Ovary (tissue), 10 donors: ENCODE measurements at regions of chr3 and their contacts with region 1.

Region 1: DNA sequence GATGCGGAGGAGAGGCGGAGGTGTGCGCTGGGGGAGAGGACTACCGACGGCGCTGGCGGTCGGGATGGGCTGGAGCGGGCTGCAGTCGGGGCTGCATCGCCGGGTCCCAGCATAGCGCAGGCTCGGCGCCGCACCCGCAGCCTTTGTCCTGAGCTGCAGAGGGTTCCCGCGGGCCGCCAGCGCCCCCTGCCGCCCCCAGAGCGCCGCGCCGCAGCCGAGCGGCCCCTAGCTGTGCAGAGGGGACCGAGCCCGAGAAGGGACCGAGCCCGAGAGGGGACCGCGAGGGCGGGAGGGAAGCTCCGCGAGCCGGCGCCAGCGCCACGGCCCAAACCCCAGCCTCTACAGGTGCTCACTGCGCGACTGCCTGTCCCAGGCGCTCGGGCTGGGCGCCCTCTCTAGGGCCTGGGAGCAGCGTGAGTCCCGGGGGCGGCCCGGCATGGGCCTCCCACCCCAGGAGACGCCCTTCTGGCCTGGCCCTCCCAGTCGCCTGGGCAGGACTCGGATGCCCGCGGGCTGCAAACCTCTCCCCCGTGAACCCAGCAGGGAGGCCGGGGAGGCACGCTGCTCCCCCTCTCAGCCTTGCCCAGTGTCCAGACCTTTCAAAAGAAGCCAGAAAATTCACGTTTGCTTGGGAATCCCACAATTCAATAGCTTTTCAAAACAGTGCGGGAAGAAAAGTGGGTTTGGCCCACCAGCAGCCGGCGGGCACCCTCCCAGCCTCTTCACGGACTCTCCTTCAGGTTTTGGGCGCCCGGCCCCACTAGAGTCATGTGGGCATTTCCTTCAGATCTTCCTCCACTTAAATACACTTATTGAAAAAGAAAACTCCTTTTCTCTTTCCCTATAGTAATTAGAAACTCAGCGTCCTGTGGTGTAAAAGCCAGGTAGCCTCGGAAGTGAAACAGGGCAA is 134.7 kb downstream of the TPRA1 start:
- DNase-seq: peak; percentile 61 to 87 (median 75)
- H3K4me3 ChIP-seq: no peak overlapping the region
- H3K27ac ChIP-seq: no peak overlapping the region
- H3K4me1 ChIP-seq: peaks cover 11% of the 10 kb centered on the region
- H3K27me3 ChIP-seq: no peaks in the 10 kb centered on the region
- CTCF ChIP-seq: peak; percentile 65 to 90 (median 85)
- EP300 ChIP-seq: no peak
- POLR2A ChIP-seq: no peak

Region 2: DNA sequence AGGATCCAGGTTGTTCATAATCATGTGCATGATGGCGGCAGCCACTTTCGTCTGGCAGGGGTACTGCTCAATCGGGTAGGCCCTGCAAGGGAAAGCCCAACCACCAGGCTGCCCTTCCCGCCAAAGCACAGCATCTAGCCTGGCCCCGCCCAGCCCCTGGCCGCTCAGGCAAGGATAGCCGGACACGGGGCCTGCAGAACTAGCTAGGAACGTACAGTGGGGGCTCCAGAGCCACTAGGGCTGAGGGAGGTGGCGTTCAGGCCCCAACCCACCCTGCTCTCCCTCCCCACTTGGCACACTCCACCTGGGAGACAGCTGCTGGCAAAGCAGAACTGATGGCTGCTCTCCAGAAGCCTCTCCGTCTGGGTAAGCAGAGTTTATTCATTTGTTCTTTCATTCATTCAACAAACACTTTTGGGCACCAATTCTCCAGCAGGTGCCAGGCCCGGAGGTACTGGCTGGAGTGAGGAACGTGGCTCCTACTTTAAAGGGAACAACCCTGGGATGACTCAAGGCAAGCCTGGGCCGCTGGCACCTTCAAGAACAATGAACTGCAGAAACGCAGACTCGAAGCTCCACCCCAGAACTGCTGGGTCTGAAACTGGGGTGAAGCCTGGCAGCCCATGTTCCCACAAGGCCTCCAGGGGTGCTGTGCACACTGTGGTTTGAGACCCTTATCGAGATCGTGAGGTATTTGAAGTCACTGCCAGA is 946.0 kb before region 1 on chr3:
- intact Hi-C with region 1: loop called in 1 of 4 experiments (anchors 10 kb)
- DNase-seq: peak in 1 of 5 donors; percentile 42
- H3K4me3 ChIP-seq: no peak overlapping the region
- H3K27ac ChIP-seq: no peak overlapping the region
- H3K4me1 ChIP-seq: no peaks in the 10 kb centered on the region
- H3K27me3 ChIP-seq: no peaks in the 10 kb centered on the region
- CTCF ChIP-seq: no peak
- EP300 ChIP-seq: no peak
- POLR2A ChIP-seq: no peak

Region 3: DNA sequence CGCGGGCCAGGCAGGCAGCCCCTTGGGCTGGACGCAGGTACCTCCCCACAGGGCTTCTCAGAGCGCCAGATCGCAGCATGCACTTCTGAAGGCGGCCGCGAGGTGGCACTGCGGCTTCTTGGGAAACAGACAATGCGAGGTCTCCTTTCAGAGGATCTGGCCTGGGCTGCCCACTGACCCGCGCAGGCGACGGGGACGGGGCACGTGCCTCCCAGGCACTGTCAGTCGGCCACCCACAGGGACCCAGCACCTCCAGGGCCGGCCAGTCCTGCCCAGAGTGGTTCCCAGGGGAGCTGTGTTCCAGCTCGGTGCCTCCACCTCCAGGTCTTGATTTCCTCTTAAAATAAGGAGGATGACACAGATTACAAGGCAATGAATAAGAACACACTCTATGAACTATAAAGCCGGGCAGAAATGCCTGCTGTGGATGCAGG is 776.5 kb before region 1 on chr3:
- intact Hi-C with region 1: loop called (anchors 5 to 10 kb)
- DNase-seq: peak; percentile 75 to 90 (median 85)
- H3K4me3 ChIP-seq: no peak overlapping the region
- H3K27ac ChIP-seq: no peak overlapping the region
- H3K4me1 ChIP-seq: no peaks in the 10 kb centered on the region
- H3K27me3 ChIP-seq: no peaks in the 10 kb centered on the region
- CTCF ChIP-seq: peak; percentile 86 to 90 (median 87)
- EP300 ChIP-seq: no peak
- POLR2A ChIP-seq: no peak

Region 4: GRCh38 chr3:126752303-126752842 is 703.4 kb before region 1 on chr3:
- intact Hi-C with region 1: loop called in 3 of 4 experiments (anchors 5 to 10 kb)
- DNase-seq: peak; percentile 73 to 87 (median 81)
- H3K4me3 ChIP-seq: no peak overlapping the region
- H3K27ac ChIP-seq: no peak overlapping the region
- H3K4me1 ChIP-seq: no peaks in the 10 kb centered on the region
- H3K27me3 ChIP-seq: no peaks in the 10 kb centered on the region
- CTCF ChIP-seq: peak; percentile 54 to 78 (median 78)
- EP300 ChIP-seq: no peak
- POLR2A ChIP-seq: no peak

Region 5: GRCh38 chr3:127363171-127363570 is 92.6 kb before region 1 on chr3:
- intact Hi-C with region 1: no loop called
- DNase-seq: no peak
- H3K4me3 ChIP-seq: no peak overlapping the region
- H3K27ac ChIP-seq: no peak overlapping the region
- H3K4me1 ChIP-seq: no peaks in the 10 kb centered on the region
- H3K27me3 ChIP-seq: no peaks in the 10 kb centered on the region
- CTCF ChIP-seq: no peak
- EP300 ChIP-seq: no peak
- POLR2A ChIP-seq: no peak

Region 6: GRCh38 chr3:127544192-127544802 is 88.5 kb after region 1 on chr3:
- intact Hi-C with region 1: loop called in 1 of 4 experiments (anchors 5 kb)
- DNase-seq: peak; percentile 60 to 76 (median 67)
- H3K4me3 ChIP-seq: no peak overlapping the region
- H3K27ac ChIP-seq: no peak overlapping the region
- H3K4me1 ChIP-seq: peaks cover 4% of the 10 kb centered on the region
- H3K27me3 ChIP-seq: no peaks in the 10 kb centered on the region
- CTCF ChIP-seq: peak in 1 of 3 donors; percentile 47
- EP300 ChIP-seq: no peak
- POLR2A ChIP-seq: no peak

Region 7: GRCh38 chr3:127556565-127556964 is 100.8 kb after region 1 on chr3:
- intact Hi-C with region 1: no loop called
- DNase-seq: no peak
- H3K4me3 ChIP-seq: no peak overlapping the region
- H3K27ac ChIP-seq: no peak overlapping the region
- H3K4me1 ChIP-seq: peaks cover 1% of the 10 kb centered on the region
- H3K27me3 ChIP-seq: no peaks in the 10 kb centered on the region
- CTCF ChIP-seq: no peak
- EP300 ChIP-seq: no peak
- POLR2A ChIP-seq: no peak